ENCODE measurements at regions of chr12 and their contacts with region 1.

Region 1: GRCh38 chr12:110100315-110100970 is 23.7 kb upstream of the IFT81 start:
- DNase-seq: no peak
- H3K4me3 ChIP-seq: no peak overlapping the region
- H3K27ac ChIP-seq: peak overlapping the region; percentile 17 to 74 (median 60)
- H3K4me1 ChIP-seq: peaks cover 5 to 31% (median 20%) of the 10 kb centered on the region in 4 donors
- H3K27me3 ChIP-seq: no peaks in the 10 kb centered on the region
- CTCF ChIP-seq: peak; percentile 85 to 95 (median 86)
- EP300 ChIP-seq: no peak
- POLR2A ChIP-seq: no peak

Region 2: GRCh38 chr12:110159671-110160245 is 59.3 kb after region 1 on chr12:
- intact Hi-C with region 1: no loop called
- DNase-seq: no peak
- H3K4me3 ChIP-seq: no peak overlapping the region
- H3K27ac ChIP-seq: no peak overlapping the region
- H3K4me1 ChIP-seq: peaks cover 0 to 4% (median 0%) of the 10 kb centered on the region in 4 donors
- H3K27me3 ChIP-seq: no peaks in the 10 kb centered on the region
- CTCF ChIP-seq: no peak
- EP300 ChIP-seq: no peak
- POLR2A ChIP-seq: no peak

Region 3: GRCh38 chr12:110224379-110225304 is 124.2 kb after region 1 on chr12:
- intact Hi-C with region 1: loop called (anchors 5 kb)
- DNase-seq: no peak
- H3K4me3 ChIP-seq: peak overlapping the region; percentile 8 to 45 (median 41)
- H3K27ac ChIP-seq: peak overlapping the region; percentile 74 to 82 (median 78)
- H3K4me1 ChIP-seq: peaks cover 23 to 48% (median 46%) of the 10 kb centered on the region in 4 donors
- H3K27me3 ChIP-seq: no peaks in the 10 kb centered on the region
- CTCF ChIP-seq: peak; percentile 51 to 71 (median 62)
- EP300 ChIP-seq: no peak
- POLR2A ChIP-seq: no peak

Region 4: GRCh38 chr12:110280779-110281548 is 180.5 kb after region 1 on chr12 and contains the start of gene ATP2A2:
- intact Hi-C with region 1: loop called (anchors 5 kb)
- DNase-seq: peak; percentile 95
- H3K4me3 ChIP-seq: peak within 1 kb of the TSS; percentile 84 to 96 (median 92)
- H3K27ac ChIP-seq: peak within 1 kb of the TSS; percentile 99 to 100 (median 100)
- H3K4me1 ChIP-seq: peaks cover 47 to 69% (median 63%) of the 10 kb centered on the region in 4 donors
- H3K27me3 ChIP-seq: no peaks in the 10 kb centered on the region
- CTCF ChIP-seq: no peak
- EP300 ChIP-seq: no peak
- POLR2A ChIP-seq: peak; percentile 64
- total RNA-seq, gene ATP2A2: 170 to 231 (median 177) TPM

Region 5: GRCh38 chr12:110431957-110432587 is 331.6 kb after region 1 on chr12:
- intact Hi-C with region 1: loop called (anchors 5 kb)
- DNase-seq: no peak
- H3K4me3 ChIP-seq: peak overlapping the region; percentile 54 to 61 (median 59)
- H3K27ac ChIP-seq: peak overlapping the region; percentile 21 to 67 (median 59)
- H3K4me1 ChIP-seq: peaks cover 0 to 4% (median 2%) of the 10 kb centered on the region in 4 donors
- H3K27me3 ChIP-seq: no peaks in the 10 kb centered on the region
- CTCF ChIP-seq: no peak
- EP300 ChIP-seq: no peak
- POLR2A ChIP-seq: no peak

Measured in esophagus muscularis mucosa (tissue), 4 donors.